CD8-positive, alpha-beta T cell (primary cell): ENCODE measurements at regions of chr16 and their contacts with region 1.

Region 1: DNA sequence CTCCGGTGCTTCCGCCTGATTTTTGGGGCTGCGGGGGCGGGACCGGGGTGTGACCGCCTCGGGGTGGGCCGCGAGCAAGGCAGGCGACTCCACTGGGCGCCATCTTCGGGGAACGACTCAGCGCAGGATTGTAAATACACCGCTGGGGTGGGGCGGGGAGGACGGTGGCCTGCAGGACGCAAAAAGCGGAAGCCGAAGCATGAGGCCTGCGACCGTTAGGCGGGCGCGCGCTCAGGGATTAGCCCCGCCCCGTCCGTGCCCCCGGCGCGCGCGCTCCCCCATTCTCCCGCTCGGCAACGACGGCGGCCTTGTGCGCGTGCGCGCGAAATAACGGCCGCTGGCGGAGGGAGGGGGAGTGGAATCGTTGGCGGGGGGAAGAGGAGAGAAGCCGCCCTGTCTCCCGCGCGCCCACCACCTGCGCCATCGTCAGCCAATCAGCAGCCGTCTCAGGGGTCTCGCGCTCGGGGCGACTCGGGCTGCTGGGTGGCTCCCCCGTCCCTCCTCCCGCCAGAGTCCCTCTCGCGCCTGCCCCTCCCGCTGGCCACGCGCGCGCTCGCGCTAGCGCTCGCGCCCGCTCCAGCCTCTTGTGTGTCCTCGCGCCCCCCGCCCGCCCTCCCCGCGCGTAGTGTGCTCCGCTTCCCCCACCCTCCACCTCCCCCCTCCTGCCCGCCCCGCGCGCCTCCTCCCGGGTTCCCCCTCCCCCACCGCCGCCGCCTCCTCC is 791 bp upstream of the MAZ start:
- DNase-seq: peak; percentile 95 to 99 (median 98)
- ATAC-seq: peak; percentile 60
- H3K4me3 ChIP-seq: peak overlapping the region; percentile 70 to 82
- H3K4me3 Mint-ChIP-seq: peak overlapping the region; percentile 99
- H3K27ac ChIP-seq: peak overlapping the region; percentile 86 to 87
- H3K27ac Mint-ChIP-seq: peak overlapping the region; percentile 100
- H3K4me1 ChIP-seq: peaks cover 42% of the 10 kb centered on the region
- H3K4me1 Mint-ChIP-seq: peaks cover 39% of the 10 kb centered on the region
- H3K27me3 ChIP-seq: no peaks in the 10 kb centered on the region
- H3K27me3 Mint-ChIP-seq: no peaks in the 10 kb centered on the region
- CTCF ChIP-seq: no peak

Region 2: DNA sequence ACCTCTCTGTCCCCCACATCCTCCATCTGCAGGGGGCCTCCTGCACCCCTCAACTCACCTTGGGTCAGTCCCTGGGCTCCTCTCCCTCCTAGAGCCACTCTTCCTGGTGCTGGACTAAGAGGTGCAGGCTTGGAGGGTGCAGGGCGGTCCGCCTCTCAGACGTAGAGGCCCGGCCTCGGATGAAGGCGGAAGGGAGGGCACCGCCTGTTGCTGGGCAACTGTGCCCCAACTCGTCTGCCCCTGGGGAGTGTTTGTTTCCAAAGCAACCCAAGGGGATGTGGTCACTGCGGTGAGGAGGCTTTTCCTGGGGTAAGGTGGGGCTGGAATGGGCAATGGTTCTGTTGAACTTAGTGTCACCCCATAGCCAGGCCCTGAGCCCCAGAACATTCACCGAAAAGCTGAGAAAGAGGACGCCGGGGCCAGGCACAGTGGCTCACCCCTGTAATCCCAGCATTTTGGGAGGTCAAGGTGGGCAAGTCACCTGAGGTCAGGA is 59.6 kb before region 1 on chr16 and contains the start of gene C16orf54:
- CTCF ChIA-PET with region 1: interaction called, 13 read pairs
- POLR2A ChIA-PET with region 1: interaction called, 8 read pairs
- intact Hi-C with region 1: loop called (anchors 1 kb)
- DNase-seq: peak; percentile 88 to 98 (median 95)
- ATAC-seq: peak; percentile 81
- H3K4me3 ChIP-seq: peak within 1 kb of the TSS; percentile 90 to 93
- H3K4me3 Mint-ChIP-seq: peak within 1 kb of the TSS; percentile 94
- H3K27ac ChIP-seq: peak within 1 kb of the TSS; percentile 96 to 98
- H3K27ac Mint-ChIP-seq: peak within 1 kb of the TSS; percentile 96
- H3K4me1 ChIP-seq: peaks cover 62% of the 10 kb centered on the region
- H3K4me1 Mint-ChIP-seq: peaks cover 69% of the 10 kb centered on the region
- H3K27me3 ChIP-seq: no peaks in the 10 kb centered on the region
- H3K27me3 Mint-ChIP-seq: no peaks in the 10 kb centered on the region
- CTCF ChIP-seq: no peak
- total RNA-seq, gene C16orf54: 129 to 132 TPM

Region 3: DNA sequence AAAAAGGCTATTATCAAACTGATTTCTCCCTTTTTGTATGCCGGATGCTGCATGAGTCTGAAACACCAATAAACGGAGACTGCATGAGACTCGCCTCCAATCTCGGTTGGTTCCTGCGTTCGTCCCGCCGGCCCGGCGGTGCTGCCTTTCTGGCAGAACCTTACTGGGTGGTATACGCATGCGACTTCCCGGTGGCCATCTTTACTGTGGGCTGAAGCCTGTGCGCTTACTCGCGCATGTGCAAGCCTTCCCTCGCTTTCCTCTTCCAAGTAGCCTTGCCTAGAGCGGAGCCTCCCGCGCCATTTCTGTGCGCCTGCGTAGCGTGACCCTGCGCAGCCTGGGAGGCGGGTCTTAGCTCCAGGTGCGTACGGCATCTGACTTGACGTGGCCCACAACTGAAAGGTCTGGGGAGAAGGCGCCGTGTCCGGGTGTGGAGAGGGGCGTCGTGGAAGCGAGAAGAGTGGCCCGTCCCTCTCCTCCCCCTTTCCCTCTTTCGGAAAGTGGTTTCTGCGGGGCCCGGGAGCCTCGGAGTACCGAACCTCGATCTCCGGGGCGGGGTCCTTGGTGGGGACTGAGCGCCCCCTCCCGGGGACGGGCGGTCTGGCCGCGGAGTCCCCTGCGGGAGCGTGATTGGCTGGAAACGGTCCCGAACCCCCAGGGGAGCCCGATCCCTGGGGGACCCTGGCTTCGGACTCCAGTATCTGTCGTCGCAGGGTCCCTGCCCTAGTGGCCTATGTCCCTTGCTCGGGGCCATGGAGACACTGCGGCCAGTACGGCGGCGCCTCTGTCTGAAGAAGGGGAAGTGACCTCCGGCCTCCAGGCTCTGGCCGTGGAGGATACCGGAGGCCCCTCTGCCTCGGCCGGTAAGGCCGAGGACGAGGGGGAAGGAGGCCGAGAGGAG is 10.5 kb after region 1 on chr16 and contains the start of gene PAGR1:
- CTCF ChIA-PET with region 1: interaction called, 53 read pairs
- POLR2A ChIA-PET with region 1: interaction called, 89 read pairs
- intact Hi-C with region 1: loop called (anchors 1 kb)
- DNase-seq: peak; percentile 97 to 100 (median 98)
- ATAC-seq: peak; percentile 77
- H3K4me3 ChIP-seq: peak within 1 kb of the TSS; percentile 74 to 90
- H3K4me3 Mint-ChIP-seq: peak within 1 kb of the TSS; percentile 98
- H3K27ac ChIP-seq: peak within 1 kb of the TSS; percentile 80 to 86
- H3K27ac Mint-ChIP-seq: peak within 1 kb of the TSS; percentile 98
- H3K4me1 ChIP-seq: peaks cover 59% of the 10 kb centered on the region
- H3K4me1 Mint-ChIP-seq: peaks cover 62% of the 10 kb centered on the region
- H3K27me3 ChIP-seq: no peaks in the 10 kb centered on the region
- H3K27me3 Mint-ChIP-seq: no peaks in the 10 kb centered on the region
- CTCF ChIP-seq: peak; percentile 92
- total RNA-seq, gene PAGR1: 13.8 to 16.8 TPM

Region 4: GRCh38 chr16:29848420-29849297 is 43.1 kb after region 1 on chr16:
- CTCF ChIA-PET with region 1: interaction called, 37 read pairs
- POLR2A ChIA-PET with region 1: interaction called, 30 read pairs
- intact Hi-C with region 1: loop called (anchors 1 kb)
- DNase-seq: peak; percentile 62 to 92 (median 84)
- ATAC-seq: peak; percentile 98
- H3K4me3 ChIP-seq: no peak overlapping the region
- H3K4me3 Mint-ChIP-seq: no peak overlapping the region
- H3K27ac ChIP-seq: no peak overlapping the region
- H3K27ac Mint-ChIP-seq: no peak overlapping the region
- H3K4me1 ChIP-seq: no peaks in the 10 kb centered on the region
- H3K4me1 Mint-ChIP-seq: peaks cover 3% of the 10 kb centered on the region
- H3K27me3 ChIP-seq: no peaks in the 10 kb centered on the region
- H3K27me3 Mint-ChIP-seq: no peaks in the 10 kb centered on the region
- CTCF ChIP-seq: peak; percentile 78

Region 5: DNA sequence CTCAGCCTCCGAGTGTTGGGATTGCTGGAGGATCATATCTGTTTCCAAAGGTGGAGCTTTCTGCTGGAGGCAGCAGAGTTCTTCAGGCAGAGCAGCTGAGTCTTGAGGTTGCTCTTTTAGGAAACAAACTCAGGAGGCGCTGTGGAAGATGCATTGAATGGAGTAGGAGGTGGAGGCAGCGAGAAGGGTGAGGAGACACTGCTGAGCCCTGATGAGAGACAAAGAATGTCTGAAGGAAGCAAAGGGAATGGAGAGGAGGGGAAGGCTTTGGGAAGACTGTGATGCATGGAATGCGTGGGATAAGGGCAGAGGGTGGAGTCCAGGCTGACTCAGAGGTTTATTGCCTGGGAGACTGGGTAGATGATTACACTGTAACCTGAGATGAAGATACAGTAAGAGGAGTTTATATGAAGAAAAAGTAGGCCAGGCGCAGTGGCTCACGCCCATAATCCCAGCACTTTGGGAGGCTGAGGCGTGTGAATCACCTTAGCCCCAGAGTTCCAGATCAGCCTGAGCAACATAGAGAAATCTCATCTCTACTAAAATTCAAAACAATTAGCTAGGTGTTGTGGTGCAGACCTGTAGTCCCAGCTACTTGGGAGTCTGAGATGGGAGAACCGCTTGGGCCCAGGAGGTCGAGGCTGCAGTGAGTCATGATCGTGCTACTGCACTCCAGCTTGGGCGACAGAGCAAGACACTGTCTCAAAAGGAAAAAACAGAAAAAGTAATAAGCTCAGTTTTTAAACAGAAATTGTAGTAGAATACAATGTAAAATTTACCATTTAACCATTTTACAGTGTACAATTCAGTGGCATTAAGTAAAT is 138.5 kb after region 1 on chr16:
- CTCF ChIA-PET with region 1: no interaction called
- POLR2A ChIA-PET with region 1: no interaction called
- intact Hi-C with region 1: no loop called
- DNase-seq: no peak
- ATAC-seq: no peak
- H3K4me3 ChIP-seq: no peak overlapping the region
- H3K4me3 Mint-ChIP-seq: no peak overlapping the region
- H3K27ac ChIP-seq: no peak overlapping the region
- H3K27ac Mint-ChIP-seq: no peak overlapping the region
- H3K4me1 ChIP-seq: no peaks in the 10 kb centered on the region
- H3K4me1 Mint-ChIP-seq: peaks cover 3% of the 10 kb centered on the region
- H3K27me3 ChIP-seq: peaks cover 0 to 3% of the 10 kb centered on the region in 2 experiments
- H3K27me3 Mint-ChIP-seq: no peaks in the 10 kb centered on the region
- CTCF ChIP-seq: no peak

Region 6: DNA sequence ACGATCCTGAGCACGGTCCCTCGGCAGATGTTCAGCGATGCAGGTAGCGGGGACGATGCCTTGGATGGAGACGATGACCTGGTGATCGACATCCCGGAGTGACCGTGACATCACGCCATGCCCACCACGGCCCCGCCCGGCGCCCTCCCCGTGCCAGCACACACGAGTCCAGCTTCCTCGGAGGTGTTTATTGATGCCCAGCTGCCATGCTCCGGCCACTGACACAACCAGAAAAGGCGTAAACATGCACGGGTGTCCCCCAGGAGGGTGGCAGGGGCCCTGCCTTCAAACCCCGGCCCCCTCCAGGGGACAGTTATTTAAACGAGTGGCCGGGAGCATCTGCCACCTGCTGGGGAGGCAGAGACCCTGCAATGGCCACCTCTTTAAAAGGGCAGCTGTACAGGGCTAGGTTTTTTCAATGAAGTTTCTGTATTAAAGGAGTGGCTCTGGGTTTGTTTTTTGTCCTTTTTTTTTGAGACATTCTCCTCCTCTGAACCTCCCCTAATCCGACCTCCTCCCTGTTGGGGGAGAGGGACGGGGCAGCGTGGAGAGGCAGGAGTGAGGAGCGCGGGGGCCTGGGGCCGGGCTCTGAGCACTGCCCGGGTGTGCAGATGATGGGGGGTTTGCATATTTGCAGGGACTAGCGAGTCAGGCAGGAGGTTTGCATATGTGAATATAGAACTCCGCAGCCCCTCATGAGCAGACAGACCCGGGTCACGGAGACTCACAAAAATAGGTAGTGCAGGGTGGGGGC is 200.0 kb after region 1 on chr16:
- CTCF ChIA-PET with region 1: no interaction called
- POLR2A ChIA-PET with region 1: no interaction called
- intact Hi-C with region 1: loop called in 1 of 2 experiments (anchors 1 kb)
- DNase-seq: peak in 7 of 9 experiments; percentile 17 to 66 (median 55)
- ATAC-seq: peak; percentile 87
- H3K4me3 ChIP-seq: no peak overlapping the region
- H3K4me3 Mint-ChIP-seq: no peak overlapping the region
- H3K27ac ChIP-seq: no peak overlapping the region
- H3K27ac Mint-ChIP-seq: no peak overlapping the region
- H3K4me1 ChIP-seq: peaks cover 5% of the 10 kb centered on the region
- H3K4me1 Mint-ChIP-seq: peaks cover 6% of the 10 kb centered on the region
- H3K27me3 ChIP-seq: peaks cover 0 to 11% of the 10 kb centered on the region in 2 experiments
- H3K27me3 Mint-ChIP-seq: peaks cover 13% of the 10 kb centered on the region
- CTCF ChIP-seq: peak; percentile 71

Region 7: GRCh38 chr16:30417529-30418349 is 612.2 kb after region 1 on chr16:
- CTCF ChIA-PET with region 1: no interaction called
- POLR2A ChIA-PET with region 1: no interaction called
- intact Hi-C with region 1: loop called in 1 of 2 experiments (anchors 5 kb)
- DNase-seq: peak; percentile 78 to 98 (median 88)
- ATAC-seq: peak; percentile 87
- H3K4me3 ChIP-seq: peak overlapping the region; percentile 52 to 72
- H3K4me3 Mint-ChIP-seq: peak overlapping the region; percentile 74
- H3K27ac ChIP-seq: peak overlapping the region; percentile 81 to 91
- H3K27ac Mint-ChIP-seq: peak overlapping the region; percentile 77
- H3K4me1 ChIP-seq: peaks cover 18% of the 10 kb centered on the region
- H3K4me1 Mint-ChIP-seq: peaks cover 7% of the 10 kb centered on the region
- H3K27me3 ChIP-seq: no peaks in the 10 kb centered on the region
- H3K27me3 Mint-ChIP-seq: no peaks in the 10 kb centered on the region
- CTCF ChIP-seq: no peak